Right ventricle myocardium inferior (tissue), 1 donor: ENCODE measurements at regions of chr1 and their contacts with region 1.

Region 1: DNA sequence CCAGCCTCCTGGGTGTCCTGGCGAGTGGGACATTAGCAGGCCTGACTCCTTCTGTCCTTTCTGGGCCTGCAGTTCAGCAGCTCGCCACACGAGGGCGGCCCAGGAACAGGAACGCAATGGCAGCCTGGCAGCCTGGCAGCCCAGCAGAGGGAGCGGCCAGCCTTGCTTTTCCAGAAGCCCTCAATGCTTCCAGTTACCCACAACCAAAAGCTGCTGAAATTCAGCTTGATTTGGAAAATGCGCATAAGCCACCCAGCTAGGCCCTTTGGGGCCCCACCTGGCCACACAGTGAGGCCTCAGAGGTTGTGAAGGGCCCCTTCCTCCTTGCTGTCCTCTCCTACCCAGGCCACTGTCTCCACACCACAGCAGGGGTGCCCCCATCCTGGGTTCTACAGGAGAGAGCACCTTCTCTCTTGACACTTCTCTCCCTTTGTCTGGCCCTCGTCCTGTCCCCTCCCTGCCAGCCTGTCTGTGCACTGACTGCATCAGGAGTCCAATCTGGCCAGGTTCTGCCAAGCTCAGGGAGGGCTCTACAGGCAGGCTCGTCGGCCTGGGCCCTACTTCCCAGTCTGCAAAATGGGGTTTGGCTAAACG is 103.4 kb upstream of the VAMP3 start:
- DNase-seq: peak; percentile 95
- ATAC-seq: peak; percentile 81

Region 2: DNA sequence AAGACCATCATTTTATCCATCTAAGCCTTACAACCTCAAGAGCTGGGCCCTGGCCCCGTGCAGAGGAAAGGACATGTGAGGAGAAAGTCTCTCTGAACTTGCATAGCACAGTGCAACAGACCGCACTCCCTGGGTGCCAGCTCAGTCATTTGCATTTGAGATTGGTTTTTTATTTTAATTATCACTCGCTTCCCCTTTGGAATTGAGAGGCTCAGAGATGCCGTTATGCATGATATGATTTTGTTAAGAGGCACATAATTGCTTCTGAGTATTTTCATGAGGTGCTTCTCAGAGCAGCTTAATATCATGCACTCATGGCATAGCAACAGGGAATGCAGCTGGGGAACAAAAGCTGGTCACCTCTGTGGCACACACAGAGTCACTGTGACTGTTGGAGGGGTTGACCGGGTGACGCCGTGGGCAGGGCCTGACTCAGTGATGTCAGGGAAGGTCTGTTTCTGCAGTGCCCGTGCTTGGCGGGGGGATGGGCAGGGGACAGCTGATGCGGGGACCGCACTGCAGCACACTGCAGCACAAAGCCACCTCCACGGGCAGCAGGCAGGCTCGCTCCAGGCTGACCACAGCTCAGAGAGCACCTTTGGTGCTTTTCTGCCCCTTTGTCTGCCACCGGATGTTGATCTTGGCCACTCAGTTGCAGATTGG is 60.2 kb after region 1 on chr1:
- intact Hi-C with region 1: no loop called
- DNase-seq: no peak
- ATAC-seq: no peak

Region 3: GRCh38 chr1:7752512-7753417 is 85.0 kb after region 1 on chr1:
- intact Hi-C with region 1: loop called (anchors 1 kb)
- DNase-seq: no peak
- ATAC-seq: peak; percentile 60

Region 4: GRCh38 chr1:7902478-7903085 is 234.9 kb after region 1 on chr1:
- intact Hi-C with region 1: loop called (anchors 5 kb)
- DNase-seq: peak; percentile 72
- ATAC-seq: peak; percentile 88